ENCODE measurements at regions of chr1 and their contacts with region 1.

Region 1: DNA sequence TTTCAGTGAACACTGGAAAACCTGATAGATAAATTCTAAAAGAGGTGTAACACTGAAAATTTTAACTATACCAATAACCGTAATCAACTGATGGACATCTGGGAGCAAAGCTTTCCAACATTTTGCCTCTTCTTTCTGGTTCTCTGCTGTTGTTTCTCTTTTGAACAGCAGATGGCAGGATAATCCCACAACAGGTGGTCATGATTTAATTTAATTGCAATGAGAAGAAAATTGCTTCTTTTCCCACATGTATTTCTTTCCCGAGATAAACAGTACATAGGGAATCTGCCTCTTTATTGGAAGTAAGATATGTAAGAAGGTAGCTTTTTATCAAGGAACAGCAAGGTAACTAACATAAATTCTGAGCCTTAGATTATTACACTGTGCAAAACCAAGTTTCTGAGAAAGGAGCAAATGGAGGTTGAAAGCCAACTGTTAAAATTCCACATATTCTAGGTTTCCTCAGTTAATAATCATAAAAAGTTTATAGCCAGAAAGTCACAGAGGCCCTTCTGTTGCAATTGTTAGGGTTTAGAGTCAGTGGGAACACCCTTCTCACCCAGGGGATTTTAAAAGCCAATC is 72.9 kb downstream of the RPS6KA1 start:
- DNase-seq: no peak
- H3K4me3 Mint-ChIP-seq: no peak overlapping the region
- H3K27ac Mint-ChIP-seq: no peak overlapping the region
- H3K4me1 Mint-ChIP-seq: peaks cover 7% of the 10 kb centered on the region
- H3K27me3 Mint-ChIP-seq: no peaks in the 10 kb centered on the region

Region 2: GRCh38 chr1:25099343-25099951 is 1503.0 kb before region 1 on chr1:
- CTCF ChIA-PET with region 1: no interaction called
- POLR2A ChIA-PET with region 1: no interaction called
- intact Hi-C with region 1: no loop called
- DNase-seq: peak; percentile 59
- H3K4me3 Mint-ChIP-seq: no peak overlapping the region
- H3K27ac Mint-ChIP-seq: no peak overlapping the region
- H3K4me1 Mint-ChIP-seq: peaks cover 50% of the 10 kb centered on the region
- H3K27me3 Mint-ChIP-seq: peaks cover 2% of the 10 kb centered on the region

Region 3: DNA sequence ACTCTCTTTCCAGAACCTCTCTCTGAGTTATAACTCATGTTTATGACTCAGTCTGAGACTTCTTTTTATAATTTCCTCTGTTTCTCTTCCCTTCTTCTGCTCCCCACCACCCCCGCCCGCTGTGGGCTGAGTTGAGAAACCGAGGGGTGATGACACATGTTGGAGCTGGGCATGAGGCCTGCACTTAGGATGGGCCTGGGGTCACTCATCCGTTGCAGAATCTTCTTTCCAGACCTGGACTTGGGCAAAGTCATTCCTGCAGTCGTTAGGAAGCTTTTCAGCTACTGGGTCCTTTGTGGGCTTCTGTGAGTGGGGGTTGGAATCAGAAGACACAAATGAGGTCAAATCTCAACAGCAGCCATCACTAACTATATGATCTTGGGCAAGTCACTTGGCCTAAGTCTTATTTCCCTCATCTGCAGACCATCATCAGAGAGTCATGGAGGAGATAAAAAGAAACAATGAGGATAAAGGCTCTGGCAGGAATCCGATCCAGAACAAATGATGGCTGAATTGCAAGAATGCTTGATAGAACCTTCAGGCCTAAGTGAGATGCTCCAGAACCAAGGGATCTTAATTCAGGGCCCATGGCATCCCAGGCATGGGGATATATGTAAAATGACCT is 19.5 kb before region 1 on chr1:
- CTCF ChIA-PET with region 1: interaction called, 17 read pairs
- POLR2A ChIA-PET with region 1: interaction called, 5 read pairs
- intact Hi-C with region 1: no loop called
- DNase-seq: peak; percentile 94
- H3K4me3 Mint-ChIP-seq: no peak overlapping the region
- H3K27ac Mint-ChIP-seq: peak overlapping the region; percentile 73
- H3K4me1 Mint-ChIP-seq: peaks cover 47% of the 10 kb centered on the region
- H3K27me3 Mint-ChIP-seq: no peaks in the 10 kb centered on the region

Region 4: GRCh38 chr1:26677306-26678115 is 75.0 kb after region 1 on chr1:
- CTCF ChIA-PET with region 1: interaction called, 12 read pairs
- POLR2A ChIA-PET with region 1: no interaction called
- intact Hi-C with region 1: loop called (anchors 5 kb)
- DNase-seq: peak; percentile 76
- H3K4me3 Mint-ChIP-seq: no peak overlapping the region
- H3K27ac Mint-ChIP-seq: no peak overlapping the region
- H3K4me1 Mint-ChIP-seq: peaks cover 18% of the 10 kb centered on the region
- H3K27me3 Mint-ChIP-seq: no peaks in the 10 kb centered on the region

Region 5: DNA sequence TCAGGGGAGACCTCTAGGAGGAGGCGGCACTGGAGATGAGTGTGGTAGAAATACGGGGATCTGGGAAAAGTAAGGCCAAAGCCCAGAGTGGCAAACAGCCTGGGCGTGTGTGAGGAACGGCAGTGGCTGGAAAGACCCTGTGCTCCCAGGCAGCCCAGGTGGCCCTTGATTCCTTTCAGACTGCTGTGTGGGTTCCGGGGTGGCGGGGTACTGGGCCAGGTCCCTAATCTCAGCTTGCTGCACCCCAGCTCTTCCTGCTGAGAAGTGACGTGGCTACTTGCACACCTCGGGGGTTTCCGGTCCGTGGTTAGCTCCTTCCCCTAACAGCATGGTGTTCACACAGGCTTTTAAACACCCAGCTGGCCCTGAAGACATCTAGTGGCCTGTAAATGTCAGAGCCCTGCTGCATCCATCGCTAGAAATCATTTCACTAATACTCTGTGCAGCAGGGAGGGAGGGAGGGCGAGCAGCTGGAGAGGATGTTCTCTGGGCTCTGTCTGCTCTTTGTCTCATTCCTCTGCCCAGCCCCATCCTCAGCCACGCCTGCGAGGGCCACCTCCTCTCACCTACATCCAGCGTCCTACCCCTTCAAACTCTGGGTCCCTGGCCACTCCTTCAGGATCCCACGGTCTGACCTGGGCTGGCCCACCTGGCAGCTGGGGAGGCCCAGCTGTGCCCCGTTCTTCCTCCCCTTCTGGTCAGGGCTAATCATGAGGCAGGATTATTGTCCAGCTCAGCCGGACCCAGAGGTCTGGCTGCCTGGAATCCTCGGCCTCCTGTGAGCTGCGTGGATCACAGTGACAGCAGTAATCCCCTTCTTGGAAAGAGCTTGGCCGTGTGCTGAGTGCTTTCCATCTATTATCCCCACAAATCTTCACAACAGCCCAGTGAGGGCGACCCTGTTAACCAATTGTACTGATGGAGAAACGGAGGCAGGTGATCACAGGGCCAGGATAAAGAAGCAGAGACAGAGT is 231.2 kb after region 1 on chr1:
- CTCF ChIA-PET with region 1: interaction called, 19 read pairs
- POLR2A ChIA-PET with region 1: no interaction called
- intact Hi-C with region 1: no loop called
- DNase-seq: peak; percentile 93
- H3K4me3 Mint-ChIP-seq: peak overlapping the region; percentile 72
- H3K27ac Mint-ChIP-seq: peak overlapping the region; percentile 100
- H3K4me1 Mint-ChIP-seq: peaks cover 78% of the 10 kb centered on the region
- H3K27me3 Mint-ChIP-seq: no peaks in the 10 kb centered on the region

Region 6: GRCh38 chr1:26877326-26877725 is 274.9 kb after region 1 on chr1:
- CTCF ChIA-PET with region 1: interaction called, 12 read pairs
- POLR2A ChIA-PET with region 1: no interaction called
- intact Hi-C with region 1: loop called (anchors 2 kb)
- DNase-seq: no peak
- H3K4me3 Mint-ChIP-seq: no peak overlapping the region
- H3K27ac Mint-ChIP-seq: no peak overlapping the region
- H3K4me1 Mint-ChIP-seq: no peaks in the 10 kb centered on the region
- H3K27me3 Mint-ChIP-seq: no peaks in the 10 kb centered on the region

Region 7: GRCh38 chr1:26882696-26883463 is 280.4 kb after region 1 on chr1:
- CTCF ChIA-PET with region 1: interaction called, 12 read pairs
- POLR2A ChIA-PET with region 1: no interaction called
- intact Hi-C with region 1: loop called (anchors 2 kb)
- DNase-seq: no peak
- H3K4me3 Mint-ChIP-seq: no peak overlapping the region
- H3K27ac Mint-ChIP-seq: no peak overlapping the region
- H3K4me1 Mint-ChIP-seq: peaks cover 7% of the 10 kb centered on the region
- H3K27me3 Mint-ChIP-seq: no peaks in the 10 kb centered on the region

Measured in activated CD4-positive, alpha-beta memory T cell treated with anti-CD3 and anti-CD28 coated beads for 36 hours (primary cell).